Motor neuron (in vitro differentiated cells): ENCODE measurements at regions of chr9 and their contacts with region 1.

Region 1: DNA sequence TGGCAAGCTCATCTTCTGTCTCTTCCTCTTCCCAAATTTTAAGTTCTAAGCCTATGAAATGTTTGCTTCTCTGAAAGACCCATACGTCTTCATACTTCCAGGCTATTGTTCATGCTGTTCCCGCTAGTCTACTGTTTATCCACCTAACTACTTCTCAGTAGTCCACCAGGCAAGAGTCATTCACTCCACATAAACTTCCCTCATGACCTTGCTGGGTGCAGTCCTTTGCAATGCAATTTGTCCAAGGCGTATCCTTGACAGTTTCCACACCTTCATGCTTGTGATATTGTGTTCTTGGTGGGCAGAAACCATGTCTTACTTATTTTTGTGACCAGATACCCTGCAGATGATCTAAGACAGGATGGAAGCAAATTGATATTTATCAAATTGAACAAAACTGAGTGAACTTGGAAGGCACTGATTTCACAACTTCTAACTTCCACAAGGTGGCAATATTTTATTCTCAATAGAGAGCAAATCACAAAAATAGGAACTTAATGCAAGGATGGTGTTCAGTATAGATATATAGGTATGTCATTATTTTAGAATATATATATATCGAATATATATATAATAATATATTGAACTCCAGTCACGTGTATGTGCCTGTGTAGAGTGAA is 30.3 kb downstream of the TYRP1 start:
- ATAC-seq: peak in 2 of 8 experiments; percentile 28 to 32
- H3K4me3 ChIP-seq: no peak overlapping the region
- H3K27ac ChIP-seq: no peak overlapping the region
- H3K4me1 ChIP-seq: peaks cover 0 to 7% of the 10 kb centered on the region in 2 donors

Region 2: GRCh38 chr9:12425878-12426864 is 297.3 kb before region 1 on chr9:
- in situ Hi-C with region 1: no loop called
- ATAC-seq: peak; percentile 33 to 95 (median 59)
- H3K4me3 ChIP-seq: no peak overlapping the region
- H3K27ac ChIP-seq: no peak overlapping the region
- H3K4me1 ChIP-seq: no peaks in the 10 kb centered on the region

Region 3: DNA sequence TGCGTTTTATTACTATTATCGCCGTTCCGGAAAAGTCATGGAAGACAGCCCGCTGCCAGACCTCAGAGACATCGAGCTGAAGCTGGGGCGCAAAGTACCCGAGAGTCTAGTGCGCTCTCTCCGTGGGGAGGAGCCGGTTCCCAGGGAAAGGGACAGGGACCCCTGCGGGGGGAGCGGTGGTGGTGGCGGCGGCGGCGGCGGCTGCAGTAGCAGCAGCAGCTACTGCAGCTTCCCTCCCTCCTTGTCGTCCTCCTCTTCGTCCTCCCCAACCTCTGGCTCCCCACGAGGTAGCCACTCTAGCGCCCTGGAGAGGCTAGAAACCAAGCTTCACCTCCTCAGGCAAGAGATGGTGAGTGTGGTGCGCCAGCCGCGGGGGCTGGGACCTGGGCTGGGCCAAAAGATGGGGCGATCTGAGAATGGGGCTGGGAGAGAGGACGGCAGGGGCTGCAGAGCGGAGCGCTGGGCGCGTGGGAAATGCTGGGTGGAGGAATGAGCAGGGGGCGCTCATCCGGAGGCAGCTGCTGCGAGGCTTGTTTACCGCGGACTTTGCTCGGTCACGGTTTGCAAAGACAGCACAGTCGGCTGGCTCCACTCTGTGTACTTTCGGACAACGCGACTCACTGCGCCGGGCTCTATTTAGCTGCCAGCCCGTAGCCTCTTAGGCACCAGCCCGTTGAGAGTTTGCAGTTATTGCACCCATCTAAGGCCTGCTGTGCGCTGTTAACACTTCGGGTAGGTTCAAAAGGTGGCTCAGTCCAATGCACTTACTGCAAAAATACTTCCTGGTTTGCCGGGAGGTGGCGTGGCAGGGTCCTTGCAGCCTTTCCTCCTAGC is 52.4 kb after region 1 on chr9:
- in situ Hi-C with region 1: loop called in 1 of 9 experiments (anchors 10 kb)
- ATAC-seq: peak; percentile 85 to 93 (median 88)
- H3K4me3 ChIP-seq: peak overlapping the region; percentile 55 to 81 (median 66)
- H3K27ac ChIP-seq: peak overlapping the region; percentile 76 to 84
- H3K4me1 ChIP-seq: peaks cover 5 to 17% of the 10 kb centered on the region in 2 donors

Region 4: GRCh38 chr9:12884737-12885414 is 161.4 kb after region 1 on chr9:
- in situ Hi-C with region 1: loop called in 2 of 9 experiments (anchors 5 to 25 kb)
- ATAC-seq: peak in 5 of 8 experiments; percentile 53 to 75 (median 67)
- H3K4me3 ChIP-seq: no peak overlapping the region
- H3K27ac ChIP-seq: no peak overlapping the region
- H3K4me1 ChIP-seq: peaks cover 0 to 18% of the 10 kb centered on the region in 2 donors

Region 5: DNA sequence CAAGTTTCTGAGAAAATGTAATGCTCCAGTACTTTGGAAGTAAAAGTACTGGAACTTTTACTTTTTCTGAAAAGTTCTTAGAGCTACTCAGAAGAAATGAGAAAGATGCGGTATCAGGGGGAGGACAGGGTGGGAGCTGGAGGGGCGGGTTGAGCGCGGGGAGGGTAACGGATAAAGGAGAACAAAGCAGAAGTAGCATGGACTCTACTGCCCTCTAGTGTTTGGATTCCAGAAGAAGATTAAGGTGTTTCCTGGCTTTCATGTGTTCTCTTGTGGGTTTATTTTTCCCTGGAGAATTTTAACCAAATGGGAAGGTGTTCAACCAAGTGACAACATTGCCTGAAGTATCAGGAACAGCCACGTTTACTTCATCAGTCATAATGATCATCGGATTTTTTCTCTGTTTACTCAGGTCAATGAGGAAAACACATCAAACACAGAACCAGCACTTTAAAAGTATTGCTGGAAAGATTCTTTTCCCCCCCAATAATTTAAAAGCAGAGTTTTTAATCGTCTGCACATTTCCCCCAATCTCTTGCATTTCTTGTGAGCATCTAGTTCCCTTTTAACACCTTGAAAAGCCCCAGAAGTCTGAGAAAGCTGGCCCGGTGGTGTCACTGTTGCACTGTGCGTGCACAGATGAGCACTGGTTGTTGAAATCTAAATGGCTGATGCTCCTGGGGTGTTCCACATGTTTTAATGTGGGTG is 365.4 kb after region 1 on chr9:
- in situ Hi-C with region 1: loop called in 4 of 9 experiments (anchors 10 to 25 kb)
- ATAC-seq: peak; percentile 50 to 93 (median 82)
- H3K4me3 ChIP-seq: no peak overlapping the region
- H3K27ac ChIP-seq: no peak overlapping the region
- H3K4me1 ChIP-seq: no peaks in the 10 kb centered on the region